Posterior vena cava (tissue), 2 donors: ENCODE measurements at regions of chr16 and their contacts with region 1.

Region 1: DNA sequence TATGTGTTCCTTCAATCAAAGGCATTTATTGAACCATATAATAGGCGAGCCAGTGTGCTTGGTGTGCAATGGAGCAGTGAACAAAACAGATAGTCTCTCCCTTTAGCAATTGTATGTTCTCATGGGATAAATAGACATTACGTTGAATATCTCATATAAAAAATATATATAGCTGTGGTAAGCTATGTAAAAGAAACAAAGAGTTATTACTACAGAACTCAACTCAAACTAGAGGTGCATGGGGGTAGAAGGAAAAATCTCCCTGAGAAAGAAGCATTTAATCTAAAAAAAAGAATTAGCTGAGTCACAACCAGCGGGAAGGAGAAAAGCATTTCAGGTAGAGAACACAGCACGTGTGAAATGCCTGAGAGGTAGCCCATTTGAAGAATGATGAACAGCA is 919.3 kb downstream of the CDH11 start:
- DNase-seq: no peak

Region 2: GRCh38 chr16:64238571-64238970 is 36.0 kb after region 1 on chr16:
- intact Hi-C with region 1: loop called in 1 of 2 experiments (anchors 2 kb)
- DNase-seq: no peak